ENCODE measurements at regions of chrX and their contacts with region 1.

Region 1: DNA sequence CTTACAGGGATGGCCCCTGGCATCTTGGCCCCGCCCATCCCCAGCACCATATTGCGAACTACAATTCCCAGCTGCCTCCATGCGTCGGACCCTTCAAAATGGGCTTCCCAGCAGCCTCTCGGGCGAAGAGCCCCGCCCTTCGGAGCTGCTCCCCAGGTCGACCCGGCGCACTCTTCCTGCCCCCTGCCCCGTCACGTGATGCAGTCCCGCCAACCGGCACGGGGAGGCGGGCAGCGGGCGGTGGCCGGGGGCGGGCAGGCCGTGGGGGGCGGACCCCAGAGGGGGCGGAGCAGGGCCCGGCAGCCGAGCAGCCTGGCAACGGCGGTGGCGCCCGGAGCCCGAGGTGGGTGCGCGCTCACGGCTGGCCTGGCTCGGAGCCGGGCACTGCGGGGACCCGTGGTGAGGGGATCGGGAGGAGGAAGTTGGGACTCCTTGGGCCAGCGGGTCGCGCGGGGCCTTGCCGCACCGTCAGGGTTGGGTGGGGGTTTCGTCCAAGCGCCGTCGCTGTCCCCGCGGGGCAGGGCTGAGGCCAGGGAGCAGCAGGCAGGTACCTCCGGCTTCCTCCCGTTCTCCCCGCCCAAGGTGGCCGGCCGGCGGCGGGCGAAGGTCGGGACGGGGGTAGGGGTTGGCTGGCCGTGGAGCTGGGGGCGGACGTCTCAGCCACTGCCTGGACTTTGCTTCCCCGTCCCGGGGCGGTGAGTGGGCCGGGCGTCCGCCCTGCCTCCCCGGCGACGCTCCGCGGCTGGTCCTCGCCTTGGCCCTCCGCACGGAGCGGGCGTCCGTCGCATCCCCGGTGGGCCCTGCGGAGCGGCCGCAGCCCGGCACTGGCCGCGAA is at the start of gene MTM1:
- DNase-seq: peak; percentile 77 to 95 (median 89)
- ATAC-seq: peak; percentile 86 to 88
- H3K4me3 Mint-ChIP-seq: peak within 1 kb of the TSS; percentile 79 to 91 (median 88)
- H3K27ac Mint-ChIP-seq: peak within 1 kb of the TSS in 9 of 10 donors; percentile 87 to 96 (median 92)
- H3K4me1 Mint-ChIP-seq: peaks cover 13 to 47% (median 41%) of the 10 kb centered on the region in 4 donors
- H3K27me3 Mint-ChIP-seq: no peaks in the 10 kb centered on the region
- polyA plus RNA-seq, gene MTM1: 12.7 to 13.4 (median 13.2) TPM

Region 2: DNA sequence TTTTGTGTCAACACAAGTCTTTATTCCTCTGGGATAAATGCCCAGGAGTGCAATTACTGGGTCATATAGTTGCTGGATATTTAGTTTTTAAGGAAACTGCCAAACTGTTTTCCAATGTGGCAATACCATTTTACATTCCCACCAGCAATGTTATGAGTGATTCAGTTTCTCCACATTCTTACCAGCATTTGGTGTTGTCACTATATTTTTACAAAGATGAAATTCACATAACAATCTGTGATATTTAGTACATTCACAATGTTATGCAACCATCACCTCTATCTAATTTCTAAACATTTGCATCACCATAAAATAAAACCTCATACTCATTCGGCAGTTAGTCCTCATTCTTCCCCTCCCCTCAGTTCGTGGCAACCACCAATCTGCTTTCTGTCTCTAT is 130.4 kb before region 1 on chrX:
- POLR2A ChIA-PET with region 1: no interaction called
- DNase-seq: no peak
- ATAC-seq: no peak
- H3K4me3 Mint-ChIP-seq: no peak overlapping the region
- H3K27ac Mint-ChIP-seq: no peak overlapping the region
- H3K4me1 Mint-ChIP-seq: no peaks in the 10 kb centered on the region
- H3K27me3 Mint-ChIP-seq: no peaks in the 10 kb centered on the region

Region 3: GRCh38 chrX:150547375-150548115 is 21.0 kb before region 1 on chrX:
- POLR2A ChIA-PET with region 1: interaction called, 37 read pairs
- DNase-seq: peak in 1 of 10 donors; percentile 62
- ATAC-seq: peak in 1 of 2 donors; percentile 39
- H3K4me3 Mint-ChIP-seq: peak overlapping the region; percentile 73 to 88 (median 84)
- H3K27ac Mint-ChIP-seq: peak overlapping the region in 7 of 10 donors; percentile 12 to 96 (median 83)
- H3K4me1 Mint-ChIP-seq: peaks cover 10 to 29% (median 26%) of the 10 kb centered on the region in 4 donors
- H3K27me3 Mint-ChIP-seq: no peaks in the 10 kb centered on the region

Region 4: DNA sequence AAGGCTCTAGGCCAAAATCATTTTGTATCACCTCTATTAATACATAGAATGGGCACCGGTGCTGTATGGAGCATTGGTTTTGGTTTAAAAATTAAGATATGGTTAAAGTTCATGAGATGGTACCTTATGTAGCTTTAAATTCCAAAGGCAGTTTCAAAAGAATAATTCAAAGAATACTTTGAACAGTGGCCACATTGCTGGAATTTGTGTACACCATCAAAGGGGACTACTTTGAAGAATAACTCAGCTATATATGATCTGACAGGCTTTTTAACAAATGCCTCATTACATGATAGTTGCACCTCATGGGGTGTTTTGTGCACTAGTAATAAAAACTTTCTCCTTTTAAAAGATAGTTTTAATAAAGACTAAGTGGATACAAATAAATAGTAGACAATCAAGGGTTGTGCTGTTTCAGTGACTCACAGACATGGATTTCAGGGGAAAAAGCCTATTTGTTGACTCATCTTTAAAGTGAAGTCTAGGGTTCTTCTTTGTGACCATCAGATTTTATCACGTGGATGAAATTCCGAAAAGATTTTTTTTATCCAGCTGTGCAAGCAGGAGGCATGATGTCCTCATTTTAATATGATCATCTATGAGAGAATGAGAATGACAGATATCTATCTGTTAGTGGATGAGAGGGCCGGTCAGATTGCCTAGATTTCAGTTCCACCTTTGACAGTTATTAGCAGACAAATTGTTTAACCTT is 12.7 kb after region 1 on chrX:
- POLR2A ChIA-PET with region 1: no interaction called
- DNase-seq: no peak
- ATAC-seq: no peak
- H3K4me3 Mint-ChIP-seq: no peak overlapping the region
- H3K27ac Mint-ChIP-seq: peak overlapping the region in 2 of 10 donors; percentile 9 to 60
- H3K4me1 Mint-ChIP-seq: peaks cover 15 to 52% (median 41%) of the 10 kb centered on the region in 4 donors
- H3K27me3 Mint-ChIP-seq: no peaks in the 10 kb centered on the region

Measured in naive thymus-derived CD8-positive, alpha-beta T cell (primary cell).